PC-9 (cell line): ENCODE measurements at regions of chr10 and their contacts with region 1.

Region 1: DNA sequence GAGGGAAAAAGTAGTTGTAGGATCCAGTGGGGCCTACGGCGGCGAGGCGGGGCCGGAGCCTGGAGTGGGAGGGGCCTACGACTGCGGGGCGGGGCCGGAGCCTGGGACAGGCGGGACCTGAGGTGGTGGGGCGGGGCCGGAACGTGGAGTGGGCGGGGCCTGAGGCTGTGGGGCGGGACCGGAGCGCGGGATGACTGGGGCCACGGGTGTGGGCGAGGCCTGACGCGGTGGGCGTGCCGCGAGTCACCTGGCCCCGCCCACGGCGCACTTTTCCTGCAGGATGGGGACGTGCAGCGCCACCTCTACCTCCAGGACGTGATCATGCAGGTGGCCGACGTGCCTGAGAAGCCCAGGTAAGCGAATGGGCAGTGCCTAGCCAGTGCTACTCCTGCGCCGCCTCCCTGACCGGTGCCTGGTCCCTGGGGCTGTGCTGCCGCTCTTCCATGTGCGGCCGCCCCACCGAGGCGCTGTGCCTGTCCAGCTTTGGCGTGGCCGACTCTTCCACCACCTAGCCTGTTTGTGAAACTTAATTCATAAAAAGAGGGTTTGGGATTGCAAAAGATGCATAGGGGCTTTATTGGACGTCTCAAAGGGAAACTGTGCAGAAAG is 501 bp downstream of the ZNF511 start:
- DNase-seq: peak; percentile 60 to 90
- H3K4me3 ChIP-seq: peak overlapping the region; percentile 88; the same call in 1 of the 2 replicates
- H3K27ac ChIP-seq: peak overlapping the region; percentile 65
- H3K4me1 ChIP-seq: peaks cover 11% of the 10 kb centered on the region
- H3K27me3 ChIP-seq: no peaks in the 10 kb centered on the region
- CTCF ChIP-seq: no peak

Region 2: GRCh38 chr10:133139551-133140065 is 169.6 kb before region 1 on chr10:
- CTCF ChIA-PET with region 1: no interaction called
- POLR2A ChIA-PET with region 1: no interaction called
- intact Hi-C with region 1: loop called (anchors 10 kb)
- DNase-seq: no peak
- H3K4me3 ChIP-seq: no peak overlapping the region
- H3K27ac ChIP-seq: no peak overlapping the region
- H3K4me1 ChIP-seq: no peaks in the 10 kb centered on the region
- H3K27me3 ChIP-seq: peaks cover 25% of the 10 kb centered on the region; the same call in 1 of the 2 replicates
- CTCF ChIP-seq: no peak

Region 3: GRCh38 chr10:133261726-133262325 is 47.4 kb before region 1 on chr10:
- CTCF ChIA-PET with region 1: no interaction called
- POLR2A ChIA-PET with region 1: interaction called, 4 read pairs
- intact Hi-C with region 1: loop called (anchors 2 kb)
- DNase-seq: peak in 1 of 2 experiments; percentile 64
- H3K4me3 ChIP-seq: peak overlapping the region; percentile 55
- H3K27ac ChIP-seq: no peak overlapping the region
- H3K4me1 ChIP-seq: peaks cover 41% of the 10 kb centered on the region
- H3K27me3 ChIP-seq: no peaks in the 10 kb centered on the region
- CTCF ChIP-seq: no peak